GM10248 (cell line): ENCODE measurements at regions of chr2 and their contacts with region 1.

Region 1: DNA sequence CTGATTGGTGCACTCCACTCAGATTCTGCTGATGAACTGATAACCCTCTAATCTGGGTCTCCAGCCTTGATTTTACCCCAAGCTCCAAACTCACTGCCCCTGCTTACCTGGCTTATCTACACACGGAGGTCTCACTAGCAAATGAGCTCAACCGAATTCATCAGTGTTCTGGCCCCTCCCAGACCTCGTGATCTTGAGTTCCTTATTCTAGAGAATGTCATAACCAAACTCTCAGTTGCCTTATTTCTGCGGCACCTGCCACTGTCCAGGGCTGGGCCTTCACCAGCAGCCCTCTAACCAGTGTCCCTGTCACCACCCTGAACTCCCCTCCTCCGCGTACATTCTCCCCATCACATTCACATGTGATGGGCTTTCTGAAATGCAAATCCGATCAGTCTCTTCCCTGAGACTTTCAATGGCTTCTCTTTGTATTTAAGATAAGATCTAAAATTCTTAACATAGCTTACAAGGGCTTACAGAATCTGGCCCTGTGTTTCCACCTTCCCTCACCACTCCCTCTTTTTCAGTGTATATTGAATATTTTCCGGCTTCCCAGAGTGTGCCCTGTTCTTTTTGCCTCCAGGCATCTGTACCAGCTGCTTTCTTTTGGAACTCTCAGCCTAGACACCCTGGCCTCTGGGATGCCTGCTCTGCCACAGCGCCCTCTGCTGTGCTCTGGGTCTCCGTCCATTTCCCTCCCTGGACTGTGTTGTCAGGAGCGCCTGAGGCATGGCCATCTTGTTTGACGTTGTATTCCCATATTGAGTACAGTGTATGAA is 31.1 kb downstream of the NAB1 start:
- DNase-seq: peak; percentile 49
- CTCF ChIP-seq: peak; percentile 84

Region 2: DNA sequence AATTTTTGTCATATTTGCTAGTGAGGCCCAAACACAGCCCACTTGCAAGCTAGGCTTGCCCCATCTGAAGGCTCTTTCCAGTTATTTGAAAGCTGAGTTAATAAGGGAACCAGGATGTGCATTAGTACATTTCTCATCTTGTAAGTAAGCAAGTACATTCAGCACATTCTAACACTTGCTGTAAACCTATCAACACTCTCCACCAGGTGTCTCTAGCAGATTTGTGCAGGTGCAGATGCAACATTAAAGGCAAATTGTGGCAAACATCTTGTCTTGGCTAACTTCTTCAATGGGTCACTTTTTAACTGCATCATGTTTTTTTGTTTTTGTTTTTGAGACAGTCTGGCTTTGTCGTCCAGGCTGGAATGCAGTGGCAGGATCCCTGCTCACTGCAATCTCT is 297.2 kb before region 1 on chr2:
- CTCF ChIA-PET with region 1: interaction called, 11 read pairs
- POLR2A ChIA-PET with region 1: no interaction called
- DNase-seq: peak; percentile 73
- CTCF ChIP-seq: peak; percentile 67

Region 3: DNA sequence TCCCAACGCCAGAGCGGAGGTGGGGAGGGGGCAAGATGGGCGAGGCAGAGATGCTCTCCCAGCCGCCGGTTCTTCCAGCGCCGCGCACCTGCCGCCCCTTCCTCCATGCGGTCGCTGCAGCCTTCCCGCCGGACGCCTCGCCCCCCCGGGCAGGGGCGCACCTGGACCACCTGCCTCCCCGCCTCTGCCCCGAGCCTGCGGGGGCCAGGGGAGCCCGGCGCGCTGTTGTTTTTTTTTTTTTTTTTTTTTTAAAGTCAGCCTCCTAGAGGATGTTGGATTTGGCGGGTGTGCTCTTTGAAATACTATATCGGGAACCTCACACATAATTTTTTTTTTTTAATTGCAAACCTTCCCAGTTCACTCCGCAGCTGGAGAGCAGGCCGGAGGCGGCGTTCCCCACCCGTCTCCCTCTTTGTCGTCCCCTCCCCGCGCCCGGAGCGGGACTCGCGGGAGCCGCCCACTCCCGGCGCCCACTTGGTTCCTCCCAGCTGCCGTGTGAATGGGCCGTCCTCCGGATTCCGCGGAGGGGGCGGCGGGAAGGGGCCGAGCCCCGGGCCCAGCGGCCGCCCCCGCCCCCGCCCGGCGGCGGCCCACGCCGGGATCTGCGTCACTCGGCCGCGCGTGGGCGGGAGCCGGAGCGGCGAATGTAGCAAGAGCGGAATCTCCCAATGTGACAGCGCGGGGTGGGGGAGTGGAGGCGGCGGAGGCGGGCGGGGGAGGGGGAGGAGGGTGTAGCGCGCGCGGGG is 31.5 kb before region 1 on chr2:
- CTCF ChIA-PET with region 1: interaction called, 24 read pairs
- POLR2A ChIA-PET with region 1: interaction called, 5 read pairs
- DNase-seq: peak; percentile 90
- CTCF ChIP-seq: no peak

Region 4: GRCh38 chr2:190695739-190696138 is 15.7 kb after region 1 on chr2:
- CTCF ChIA-PET with region 1: interaction called, 111 read pairs
- POLR2A ChIA-PET with region 1: interaction called, 14 read pairs
- DNase-seq: no peak
- CTCF ChIP-seq: no peak

Region 5: GRCh38 chr2:190718652-190719526 is 38.9 kb after region 1 on chr2:
- CTCF ChIA-PET with region 1: interaction called, 12 read pairs
- POLR2A ChIA-PET with region 1: interaction called, 4 read pairs
- DNase-seq: peak; percentile 67
- CTCF ChIP-seq: peak; percentile 12

Region 6: DNA sequence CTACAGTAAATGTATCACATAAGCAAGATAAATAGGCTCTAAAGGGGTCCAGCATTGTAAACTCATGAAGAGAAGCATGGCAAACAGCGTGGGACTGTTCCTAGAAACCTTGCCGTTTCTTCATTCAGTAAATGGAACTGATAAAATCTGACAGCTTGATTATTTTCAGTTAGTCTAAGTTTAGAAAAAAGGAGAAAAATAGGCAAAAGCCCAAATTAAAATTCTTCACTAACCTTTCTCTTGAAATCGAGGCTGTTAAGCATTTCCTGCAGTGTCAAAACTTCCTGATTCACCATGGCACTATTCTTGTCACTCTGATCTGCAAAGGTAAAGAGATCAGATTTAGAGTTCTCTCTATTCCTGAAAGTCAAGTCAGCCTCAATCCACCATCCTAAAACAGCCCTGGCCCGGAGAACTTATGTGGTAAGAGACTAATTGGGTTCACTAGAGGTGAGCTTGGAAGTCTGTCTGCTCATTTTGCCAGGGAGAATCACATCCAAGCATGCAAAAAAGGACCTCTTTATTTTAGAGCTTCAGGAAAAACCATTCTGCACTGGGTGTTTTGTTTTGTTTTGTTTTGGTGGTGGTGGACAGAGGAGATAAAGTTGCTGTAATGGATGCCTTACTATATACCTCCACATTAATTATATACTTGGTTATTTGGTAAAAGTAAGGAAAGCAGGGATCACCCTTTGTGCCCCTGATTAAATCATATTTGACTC is 386.4 kb after region 1 on chr2:
- CTCF ChIA-PET with region 1: no interaction called
- POLR2A ChIA-PET with region 1: no interaction called
- DNase-seq: no peak
- CTCF ChIP-seq: no peak